Activated CD4-positive, alpha-beta T cell treated with anti-CD3 and anti-CD28 coated beads for 36 hours (primary cell): ENCODE measurements at regions of chr6 and their contacts with region 1.

Region 1: DNA sequence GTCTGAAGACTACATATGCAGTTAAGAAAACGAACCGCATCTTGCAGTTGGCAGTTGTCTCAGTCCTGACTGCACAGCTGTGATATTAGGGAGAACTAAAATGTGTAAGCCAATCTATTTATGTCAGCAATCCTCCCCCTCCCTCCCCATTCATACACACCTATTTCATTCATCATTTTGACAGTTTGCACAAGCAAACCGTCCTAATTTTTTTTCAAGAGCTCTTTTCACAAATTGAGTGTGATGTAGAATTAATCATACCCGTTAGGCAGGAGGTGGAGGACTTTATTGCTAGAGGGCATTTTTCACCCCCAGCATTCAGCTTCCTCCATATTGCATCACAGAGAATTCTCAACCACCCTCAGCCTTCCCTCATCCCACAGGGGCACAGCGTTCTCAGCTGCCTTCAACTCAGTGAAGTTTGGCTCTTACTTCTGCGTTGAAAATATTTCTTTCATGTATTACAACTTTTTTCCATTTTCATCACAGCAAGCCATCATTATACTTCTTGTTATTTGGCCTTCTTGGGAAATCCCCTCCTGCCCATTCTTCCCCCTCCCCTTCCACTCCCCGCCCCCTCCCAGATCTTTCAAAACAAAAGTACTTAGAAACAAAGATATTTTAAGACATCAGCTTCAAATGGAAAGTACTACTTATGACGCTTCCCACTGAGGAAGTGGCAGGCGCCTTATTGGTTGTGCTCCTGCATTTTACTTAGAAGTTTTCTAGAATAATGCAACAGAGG is 37.5 kb downstream of the NOX3 start:
- DNase-seq: peak; percentile 86
- ATAC-seq: peak; percentile 83
- H3K4me3 Mint-ChIP-seq: peak overlapping the region; percentile 65
- H3K27ac Mint-ChIP-seq: peak overlapping the region; percentile 98
- H3K4me1 Mint-ChIP-seq: peaks cover 48% of the 10 kb centered on the region
- H3K27me3 Mint-ChIP-seq: no peaks in the 10 kb centered on the region

Region 2: DNA sequence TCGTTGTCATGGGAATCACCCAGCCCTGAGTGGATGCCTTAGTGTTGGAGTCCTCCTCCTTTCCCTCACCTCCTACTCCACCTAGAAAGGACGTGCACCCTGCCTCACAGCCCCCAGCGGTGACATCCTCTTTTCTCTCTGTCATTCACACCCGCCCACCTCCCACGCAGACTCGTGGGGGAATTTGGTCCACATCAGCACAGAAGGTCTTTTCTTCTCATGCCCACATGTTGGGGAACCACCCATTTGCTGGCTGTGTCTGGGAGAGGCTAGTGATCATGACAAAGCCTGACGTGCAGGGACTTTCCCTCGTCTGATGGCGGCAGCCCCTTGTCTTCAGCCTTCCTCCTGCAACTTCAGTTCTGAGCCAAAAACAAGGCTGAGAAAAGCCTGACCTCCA is 811.7 kb before region 1 on chr6:
- CTCF ChIA-PET with region 1: no interaction called
- POLR2A ChIA-PET with region 1: no interaction called
- intact Hi-C with region 1: loop called in 1 of 2 experiments (anchors 5 kb)
- DNase-seq: peak; percentile 96
- ATAC-seq: peak; percentile 92
- H3K4me3 Mint-ChIP-seq: peak overlapping the region; percentile 13
- H3K27ac Mint-ChIP-seq: peak overlapping the region; percentile 84
- H3K4me1 Mint-ChIP-seq: peaks cover 45% of the 10 kb centered on the region
- H3K27me3 Mint-ChIP-seq: peaks cover 4% of the 10 kb centered on the region

Region 3: DNA sequence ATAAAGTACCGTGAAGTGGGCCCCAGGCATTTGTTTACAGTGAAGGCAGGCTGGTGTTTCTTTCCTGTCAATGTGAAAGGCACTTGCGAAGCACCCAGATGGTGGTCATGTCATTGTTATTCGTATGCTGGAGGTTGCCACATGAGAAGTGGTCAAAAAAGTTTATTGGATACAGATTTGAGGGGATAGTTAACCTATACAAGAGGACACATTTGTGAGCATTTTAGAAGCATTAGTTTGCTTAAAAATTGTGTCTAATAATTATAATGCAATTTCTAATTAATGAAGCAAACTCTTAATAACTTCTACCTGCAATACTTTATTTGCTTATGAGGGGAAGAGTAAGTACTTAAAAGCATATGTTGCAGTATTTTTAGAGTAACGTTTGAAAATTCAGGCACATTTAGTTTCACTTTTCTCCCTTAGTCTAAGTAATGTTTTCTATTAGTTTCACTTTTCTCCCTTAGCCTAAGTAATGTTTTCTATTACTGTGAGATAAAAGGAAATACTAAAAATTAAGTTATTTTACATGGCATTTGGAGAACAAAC is 275.1 kb before region 1 on chr6:
- CTCF ChIA-PET with region 1: no interaction called
- POLR2A ChIA-PET with region 1: no interaction called
- intact Hi-C with region 1: no loop called
- DNase-seq: no peak
- ATAC-seq: peak; percentile 30
- H3K4me3 Mint-ChIP-seq: peak overlapping the region; percentile 65
- H3K27ac Mint-ChIP-seq: peak overlapping the region; percentile 92
- H3K4me1 Mint-ChIP-seq: peaks cover 32% of the 10 kb centered on the region
- H3K27me3 Mint-ChIP-seq: no peaks in the 10 kb centered on the region

Region 4: DNA sequence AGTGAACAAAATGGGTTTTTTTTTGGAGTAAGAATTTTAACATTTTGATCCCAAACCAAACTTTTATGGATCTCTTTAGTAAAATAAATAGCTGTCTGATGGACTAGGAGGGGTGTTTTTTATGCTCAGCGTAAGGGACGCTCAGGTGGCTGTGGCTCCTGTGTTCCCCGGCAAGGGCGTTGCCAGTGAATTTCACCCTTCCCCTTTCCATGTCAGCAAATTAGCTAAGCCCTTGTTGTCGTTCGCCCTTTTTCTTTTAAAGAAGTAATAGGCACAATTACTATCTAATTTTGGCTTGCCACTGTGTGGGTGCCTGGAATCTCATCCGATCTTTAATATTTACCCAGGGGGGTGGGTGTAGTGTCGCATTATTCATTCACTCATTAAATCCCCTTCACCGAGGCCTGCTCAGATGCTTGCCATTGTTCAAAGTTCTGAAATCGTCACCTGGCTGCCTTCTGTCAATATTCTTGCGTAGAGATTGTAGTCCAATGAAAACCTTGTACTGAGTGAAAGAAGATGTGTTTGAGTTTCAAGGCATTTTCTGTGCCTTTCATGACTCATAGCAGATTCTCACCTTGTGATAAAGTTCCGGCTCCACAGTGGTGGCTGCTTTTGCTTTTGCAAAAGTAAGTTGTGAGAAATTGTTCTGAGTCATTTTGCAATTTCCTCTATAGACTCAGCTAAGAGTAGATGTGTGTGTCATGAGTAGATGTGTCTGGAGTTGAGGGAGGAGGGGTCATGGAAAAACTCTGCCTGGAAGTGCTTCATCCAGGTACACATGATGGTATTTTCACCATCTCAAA is 194.3 kb before region 1 on chr6:
- CTCF ChIA-PET with region 1: no interaction called
- POLR2A ChIA-PET with region 1: no interaction called
- intact Hi-C with region 1: loop called (anchors 1 kb)
- DNase-seq: peak; percentile 79
- ATAC-seq: peak; percentile 99
- H3K4me3 Mint-ChIP-seq: peak overlapping the region; percentile 10
- H3K27ac Mint-ChIP-seq: peak overlapping the region; percentile 79
- H3K4me1 Mint-ChIP-seq: peaks cover 18% of the 10 kb centered on the region
- H3K27me3 Mint-ChIP-seq: peaks cover 3% of the 10 kb centered on the region

Region 5: GRCh38 chr6:155333414-155333813 is 84.8 kb before region 1 on chr6:
- CTCF ChIA-PET with region 1: no interaction called
- POLR2A ChIA-PET with region 1: no interaction called
- intact Hi-C with region 1: loop called in 1 of 2 experiments (anchors 2 kb)
- DNase-seq: peak; percentile 44
- ATAC-seq: peak; percentile 93
- H3K4me3 Mint-ChIP-seq: peak overlapping the region; percentile 33
- H3K27ac Mint-ChIP-seq: peak overlapping the region; percentile 70
- H3K4me1 Mint-ChIP-seq: peaks cover 40% of the 10 kb centered on the region
- H3K27me3 Mint-ChIP-seq: no peaks in the 10 kb centered on the region

Region 6: DNA sequence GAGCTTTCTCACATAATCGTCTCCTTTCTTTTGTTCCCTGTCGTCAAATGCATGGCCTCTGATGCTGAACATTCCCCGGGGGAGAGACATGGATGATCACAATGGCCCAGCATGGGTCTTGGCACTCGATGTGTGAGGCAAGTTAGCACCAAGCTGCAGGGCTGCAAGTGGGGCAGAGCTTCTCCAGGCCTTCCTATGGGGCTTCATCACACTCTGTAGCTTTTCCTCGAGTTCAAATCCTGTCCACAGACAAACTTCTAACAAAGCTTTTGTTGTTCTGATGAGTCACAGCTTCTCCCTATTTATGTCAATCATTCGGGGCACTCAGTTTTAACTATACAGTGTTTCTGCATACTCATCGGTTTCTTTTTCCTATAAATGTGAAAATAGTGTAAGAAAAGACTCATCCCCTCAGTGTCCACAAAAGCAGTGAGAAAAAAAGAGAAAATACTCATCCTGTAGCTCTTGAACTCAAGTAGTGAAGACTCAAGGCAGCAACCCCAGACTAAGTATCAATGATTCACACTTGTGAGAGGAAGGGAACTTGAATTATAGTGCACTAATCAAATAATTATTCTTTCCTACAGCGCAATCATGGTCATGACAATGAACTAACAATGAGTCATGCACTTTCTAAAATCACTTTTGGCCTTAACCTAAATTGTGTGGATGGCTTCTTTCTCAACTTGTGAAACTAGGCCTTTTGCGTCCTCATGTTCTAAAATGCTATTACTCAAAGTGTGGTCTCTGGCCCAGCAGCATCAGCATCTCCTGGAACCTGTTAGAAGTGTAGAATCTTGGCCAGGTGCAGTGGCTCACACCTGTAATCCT is 105.8 kb after region 1 on chr6:
- CTCF ChIA-PET with region 1: interaction called, 5 read pairs
- POLR2A ChIA-PET with region 1: no interaction called
- intact Hi-C with region 1: loop called (anchors 1 kb)
- DNase-seq: peak; percentile 35
- ATAC-seq: peak; percentile 93
- H3K4me3 Mint-ChIP-seq: no peak overlapping the region
- H3K27ac Mint-ChIP-seq: peak overlapping the region; percentile 77
- H3K4me1 Mint-ChIP-seq: peaks cover 18% of the 10 kb centered on the region
- H3K27me3 Mint-ChIP-seq: no peaks in the 10 kb centered on the region

Region 7: GRCh38 chr6:156256161-156256560 is 838.0 kb after region 1 on chr6:
- CTCF ChIA-PET with region 1: no interaction called
- POLR2A ChIA-PET with region 1: no interaction called
- intact Hi-C with region 1: loop called in 1 of 2 experiments (anchors 2 kb)
- DNase-seq: peak; percentile 50
- ATAC-seq: peak; percentile 87
- H3K4me3 Mint-ChIP-seq: no peak overlapping the region
- H3K27ac Mint-ChIP-seq: peak overlapping the region; percentile 75
- H3K4me1 Mint-ChIP-seq: peaks cover 32% of the 10 kb centered on the region
- H3K27me3 Mint-ChIP-seq: peaks cover 4% of the 10 kb centered on the region

Region 8: DNA sequence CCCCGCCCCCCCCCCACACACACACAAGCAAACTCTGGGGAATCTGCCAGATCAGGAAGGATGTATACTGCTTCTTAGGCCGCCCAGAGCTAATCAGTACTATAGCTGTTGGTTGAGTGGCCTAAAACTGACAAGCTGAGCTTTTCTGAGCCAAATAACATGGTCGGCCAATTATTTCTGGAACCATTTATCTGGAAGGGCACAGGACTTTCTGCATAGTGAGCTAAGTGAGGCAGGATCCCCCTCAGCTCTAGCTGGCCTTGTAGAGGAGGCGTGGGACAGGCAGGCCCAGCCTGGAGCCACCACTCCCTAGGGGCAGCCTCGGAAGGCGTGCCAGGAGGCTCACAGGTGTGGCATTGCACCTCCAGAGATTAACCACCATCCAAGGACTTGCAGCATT is 1705.0 kb after region 1 on chr6:
- CTCF ChIA-PET with region 1: no interaction called
- POLR2A ChIA-PET with region 1: no interaction called
- intact Hi-C with region 1: no loop called
- DNase-seq: no peak
- ATAC-seq: no peak
- H3K4me3 Mint-ChIP-seq: no peak overlapping the region
- H3K27ac Mint-ChIP-seq: no peak overlapping the region
- H3K4me1 Mint-ChIP-seq: peaks cover 4% of the 10 kb centered on the region
- H3K27me3 Mint-ChIP-seq: no peaks in the 10 kb centered on the region